Dorsolateral prefrontal cortex (tissue), 120 donors: ENCODE measurements at regions of chr2 and their contacts with region 1.

Region 1: GRCh38 chr2:148971547-148971946 is 67.0 kb upstream of the LYPD6B start:
- DNase-seq: no peak
- H3K4me3 ChIP-seq: no peak overlapping the region
- H3K27ac ChIP-seq: peak overlapping the region in 11 of 59 donors; percentile 1 to 90 (median 18)
- H3K27me3 ChIP-seq: no peaks in the 10 kb centered on the region
- CTCF ChIP-seq: no peak

Region 2: DNA sequence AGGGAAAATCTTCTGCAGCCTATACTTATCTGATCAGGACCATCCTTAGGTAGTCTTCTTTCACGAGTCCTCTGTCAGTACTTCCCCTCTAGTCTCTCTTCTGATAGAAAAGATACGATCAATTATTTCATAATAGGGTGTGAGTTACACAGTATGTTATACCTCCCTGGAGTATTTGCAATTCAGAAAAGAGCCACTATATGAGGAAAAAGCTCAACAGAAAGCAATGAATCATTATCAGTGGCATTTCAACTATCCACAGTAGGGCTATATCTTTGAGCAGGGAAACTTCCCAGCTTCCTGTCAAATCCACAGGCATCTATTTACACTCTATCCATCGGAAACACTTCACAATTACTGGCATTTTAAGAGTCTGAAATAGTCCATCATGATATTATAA is 1232.0 kb before region 1 on chr2:
- intact Hi-C with region 1: no loop called
- DNase-seq: no peak
- H3K4me3 ChIP-seq: no peak overlapping the region
- H3K27ac ChIP-seq: no peak overlapping the region
- H3K27me3 ChIP-seq: no peaks in the 10 kb centered on the region
- CTCF ChIP-seq: no peak

Region 3: GRCh38 chr2:148298196-148298595 is 673.4 kb before region 1 on chr2:
- intact Hi-C with region 1: no loop called
- DNase-seq: peak in 1 of 10 donors; percentile 45
- H3K4me3 ChIP-seq: no peak overlapping the region
- H3K27ac ChIP-seq: no peak overlapping the region
- H3K27me3 ChIP-seq: no peaks in the 10 kb centered on the region
- CTCF ChIP-seq: no peak

Region 4: DNA sequence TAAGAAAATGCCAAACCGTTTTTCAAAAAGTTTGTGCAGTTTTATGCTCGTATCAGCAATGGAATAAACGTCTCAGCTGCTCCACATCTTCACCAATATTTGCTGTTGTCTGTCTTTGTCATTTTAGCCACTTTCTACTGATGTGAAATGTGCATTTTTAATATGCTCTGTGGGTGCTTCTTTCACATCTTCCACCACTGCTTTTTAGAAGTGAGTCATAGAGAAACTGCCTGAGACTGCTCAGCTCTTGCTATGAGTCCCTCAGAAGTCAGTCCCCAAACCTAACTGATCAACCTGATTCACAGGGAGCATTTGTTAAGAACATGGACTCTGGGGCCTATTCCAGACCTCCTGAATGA is 368.0 kb before region 1 on chr2:
- intact Hi-C with region 1: no loop called
- DNase-seq: no peak
- H3K4me3 ChIP-seq: no peak overlapping the region
- H3K27ac ChIP-seq: no peak overlapping the region
- H3K27me3 ChIP-seq: no peaks in the 10 kb centered on the region
- CTCF ChIP-seq: no peak

Region 5: GRCh38 chr2:148874868-148875341 is 96.6 kb before region 1 on chr2 and contains the start of gene KIF5C:
- intact Hi-C with region 1: loop called in 1 of 2 experiments (anchors 10 kb)
- DNase-seq: peak; percentile 84 to 96 (median 92)
- H3K4me3 ChIP-seq: peak within 1 kb of the TSS; percentile 52 to 97 (median 88)
- H3K27ac ChIP-seq: peak within 1 kb of the TSS; percentile 20 to 94 (median 89)
- H3K27me3 ChIP-seq: no peaks in the 10 kb centered on the region
- CTCF ChIP-seq: peak in 4 of 56 donors; percentile 8 to 19 (median 12)
- total RNA-seq, gene KIF5C: 329 to 792 (median 457) TPM

Region 6: DNA sequence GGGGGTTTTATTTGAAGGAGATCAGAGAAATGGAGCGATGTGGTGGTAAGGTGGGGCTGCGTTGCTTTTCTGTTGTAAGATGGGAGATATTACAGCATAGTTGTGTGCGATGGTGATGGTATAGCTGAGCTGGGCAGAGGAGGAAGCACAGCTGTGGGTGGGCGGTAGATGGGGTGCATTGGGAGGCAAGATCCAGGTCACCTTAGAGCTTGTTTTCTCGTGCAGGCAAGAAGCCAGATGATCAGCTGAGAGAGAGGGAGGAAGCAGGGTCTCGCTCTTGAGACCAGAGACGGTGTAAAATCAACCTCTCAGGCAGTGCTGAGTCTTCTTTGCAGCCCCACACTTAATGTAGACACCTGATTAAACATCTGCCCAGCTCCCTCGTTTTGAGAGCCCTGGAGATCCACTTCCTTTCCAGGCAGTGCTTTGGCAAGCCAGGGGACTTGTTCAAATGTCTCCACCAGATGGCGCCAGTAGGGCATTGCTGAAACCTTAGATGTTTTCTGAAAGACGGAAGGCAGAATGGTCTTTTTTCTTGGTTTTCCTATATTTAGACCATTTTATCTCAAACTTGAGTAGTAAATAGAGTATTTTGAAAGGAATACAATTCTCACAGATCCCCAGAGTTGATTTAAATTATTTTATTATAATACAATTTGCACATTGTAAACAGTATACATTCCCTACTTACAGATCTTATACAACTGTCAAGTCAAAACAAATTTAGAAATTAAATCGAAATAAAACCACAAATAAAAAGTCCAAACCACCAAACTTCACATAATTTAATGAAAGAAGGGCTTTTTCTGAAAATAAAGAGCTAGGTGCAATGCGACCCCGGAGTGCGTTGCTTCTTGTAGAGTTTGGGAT is 45.8 kb after region 1 on chr2:
- intact Hi-C with region 1: no loop called
- DNase-seq: peak; percentile 61 to 91 (median 84)
- H3K4me3 ChIP-seq: peak overlapping the region in 1 of 59 donors; percentile 29
- H3K27ac ChIP-seq: peak overlapping the region in 36 of 59 donors; percentile 1 to 77 (median 26)
- H3K27me3 ChIP-seq: no peaks in the 10 kb centered on the region
- CTCF ChIP-seq: peak; percentile 78 to 98 (median 94)